GM18951 (cell line): ENCODE measurements at regions of chr1 and their contacts with region 1.

Region 1: GRCh38 chr1:9784508-9785133 is 39.1 kb downstream of the CLSTN1 start:
- POLR2A ChIP-seq: no peak

Region 2: DNA sequence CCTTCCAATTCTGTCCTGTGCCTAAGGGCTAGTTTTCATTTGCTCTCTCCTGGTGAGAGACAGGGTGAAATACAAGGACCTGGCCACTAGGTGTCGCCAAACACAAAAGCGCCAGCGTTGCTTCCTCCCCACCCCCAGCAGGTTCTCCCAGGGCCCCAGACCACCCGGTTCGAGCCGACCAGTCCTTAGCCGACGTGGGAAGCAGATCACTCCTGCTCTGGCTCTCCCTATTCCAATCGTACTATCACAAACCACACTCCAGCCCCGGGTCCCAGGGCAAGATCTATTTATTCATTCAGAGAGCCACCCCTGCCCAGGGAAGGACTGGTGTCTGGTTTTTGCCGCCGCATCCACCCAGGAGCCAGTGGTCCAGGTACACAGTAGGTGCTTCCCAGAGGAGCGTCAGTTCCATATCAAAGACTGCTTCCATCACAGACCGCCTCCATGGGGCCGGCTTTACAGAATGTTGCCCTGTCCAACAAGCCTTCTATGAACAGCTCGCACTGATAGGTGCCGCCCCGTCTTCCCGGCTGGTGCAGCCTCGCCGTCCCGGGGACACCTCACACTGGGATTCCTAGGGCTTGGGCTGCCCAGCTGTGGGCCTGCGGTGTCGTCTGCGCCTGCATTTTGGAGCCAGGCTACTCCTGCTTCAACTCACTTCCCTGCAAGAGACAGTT is 90.5 kb after region 1 on chr1:
- in situ Hi-C with region 1: loop called (anchors 5 kb)
- POLR2A ChIP-seq: no peak